ENCODE measurements at regions of chr19 and their contacts with region 1.

Region 1: DNA sequence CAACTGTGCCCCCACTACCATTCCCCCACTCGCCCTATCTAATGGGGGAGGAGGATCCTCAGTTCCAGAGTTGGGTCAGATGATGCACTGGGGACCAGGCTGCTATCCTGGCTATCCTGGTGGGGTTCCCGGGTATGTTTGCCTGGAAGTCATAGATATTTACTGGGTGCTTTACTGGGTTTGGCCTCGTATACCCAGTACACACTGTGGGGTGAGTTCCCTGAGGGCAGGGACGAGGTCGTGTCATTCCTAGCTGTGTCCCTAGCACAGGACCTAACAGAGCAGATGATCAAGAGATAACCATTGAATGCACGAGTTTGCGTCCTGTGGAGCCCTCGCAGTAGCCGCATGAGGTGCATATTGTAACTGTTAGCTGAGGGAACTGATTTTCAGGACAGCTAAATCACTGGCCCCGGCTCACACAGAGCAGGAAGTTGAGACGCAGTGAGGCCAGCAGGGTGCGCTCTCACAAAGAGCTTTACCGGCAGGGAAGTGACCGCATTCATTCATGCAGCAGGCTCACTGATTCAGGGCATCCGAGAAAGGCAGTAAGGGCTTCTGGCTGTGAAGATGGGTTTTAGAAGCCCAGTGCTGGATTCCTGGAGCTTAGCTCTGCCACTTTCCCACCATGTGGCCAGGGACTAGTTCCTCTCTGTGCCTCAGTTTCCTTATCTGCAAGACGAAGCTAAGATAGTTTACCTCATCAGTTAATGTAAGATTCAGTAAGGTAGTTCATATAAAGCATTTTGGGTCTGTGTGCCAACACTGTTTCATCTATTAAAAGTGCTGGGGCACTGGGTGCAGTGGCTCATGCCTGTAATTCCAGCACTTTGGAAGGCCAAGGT is 6.0 kb downstream of the RUVBL2 start:
- DNase-seq: peak; percentile 54
- CTCF ChIP-seq: peak; percentile 81

Region 2: DNA sequence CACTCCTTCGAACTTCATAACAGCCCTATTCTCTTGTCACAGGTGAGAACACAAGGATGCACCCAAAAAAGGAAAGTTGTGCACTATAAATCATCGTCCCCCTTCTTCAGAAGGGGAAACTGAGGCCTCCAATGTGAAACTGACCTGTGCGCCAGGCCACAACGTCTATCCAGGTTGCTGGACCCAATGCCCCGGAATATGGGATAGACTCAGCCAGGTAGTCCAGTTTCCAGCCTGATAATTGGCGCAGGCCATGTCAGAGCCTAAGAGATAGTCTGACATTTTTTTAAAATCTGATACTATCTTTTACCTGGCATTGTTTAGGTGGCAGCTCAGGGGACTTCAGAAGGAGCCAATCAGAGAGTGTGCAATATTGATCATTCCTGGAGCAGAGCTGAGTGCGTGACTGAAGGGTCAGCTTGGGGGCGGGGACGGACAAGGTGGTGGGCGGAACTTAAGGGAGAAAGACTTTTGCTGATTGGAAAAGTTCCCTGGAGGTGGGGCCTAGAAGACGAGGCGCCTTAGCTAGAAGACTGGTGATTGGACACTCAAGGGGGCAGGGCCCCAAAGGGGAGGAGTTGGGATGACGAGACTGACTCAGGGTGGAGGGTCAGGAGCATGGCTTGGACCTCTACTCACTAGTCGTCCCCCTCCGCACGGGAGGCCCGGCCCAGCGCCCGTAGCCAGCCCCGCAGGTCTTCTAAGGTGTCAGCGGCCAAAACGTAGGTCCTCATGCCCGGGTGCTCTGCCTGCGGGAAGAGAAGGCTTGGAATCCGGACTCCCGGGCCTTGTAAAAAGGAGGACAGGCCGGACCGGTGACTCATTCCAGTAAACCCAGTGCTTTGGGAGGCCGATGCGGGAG is 139.8 kb before region 1 on chr19:
- CTCF ChIA-PET with region 1: no interaction called
- POLR2A ChIA-PET with region 1: no interaction called
- DNase-seq: peak; percentile 56
- CTCF ChIP-seq: no peak

Region 3: GRCh38 chr19:48987423-48987722 is 12.3 kb before region 1 on chr19:
- CTCF ChIA-PET with region 1: interaction called, 11 read pairs
- POLR2A ChIA-PET with region 1: no interaction called
- DNase-seq: no peak
- CTCF ChIP-seq: no peak

Region 4: GRCh38 chr19:49017666-49018351 is 18.1 kb after region 1 on chr19:
- CTCF ChIA-PET with region 1: interaction called, 36 read pairs
- POLR2A ChIA-PET with region 1: interaction called, 3 read pairs
- DNase-seq: peak; percentile 79
- CTCF ChIP-seq: peak; percentile 53

Region 5: DNA sequence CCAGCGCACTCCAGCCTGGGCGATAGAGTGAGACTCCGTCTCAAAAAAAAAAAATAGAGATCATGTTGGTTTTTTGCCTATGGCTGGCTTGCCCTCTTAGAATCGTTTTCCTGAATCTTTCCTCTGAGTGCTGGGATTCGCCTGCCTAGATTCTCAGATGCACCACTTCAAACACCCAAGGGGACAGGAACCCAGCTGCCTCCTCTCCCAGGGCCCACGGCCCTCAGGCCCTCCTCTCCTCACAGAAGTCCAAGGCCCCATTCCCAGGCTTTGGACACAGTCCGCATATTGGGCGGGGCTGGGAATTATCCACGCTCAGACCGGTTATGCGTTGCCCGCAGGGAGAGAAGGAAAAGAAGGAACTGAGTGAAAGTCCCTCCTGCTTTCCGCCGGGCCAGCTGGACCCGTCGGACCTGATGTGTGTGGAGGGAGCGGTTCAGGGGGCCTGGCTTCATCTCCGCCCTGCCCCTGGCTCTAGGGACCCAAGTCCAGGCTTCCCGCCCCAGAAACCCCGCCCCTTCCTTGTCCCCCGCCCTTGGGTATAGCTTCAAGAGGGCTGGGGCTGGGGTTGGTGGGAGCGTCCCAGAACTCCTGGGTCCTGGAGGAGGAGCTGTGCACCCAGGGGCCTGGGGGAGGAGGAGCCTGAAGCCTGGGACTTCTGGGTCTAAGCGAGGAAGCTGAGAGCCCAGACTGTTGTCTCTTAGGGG is 125.5 kb after region 1 on chr19:
- CTCF ChIA-PET with region 1: no interaction called
- POLR2A ChIA-PET with region 1: no interaction called
- DNase-seq: no peak
- CTCF ChIP-seq: no peak

Region 6: DNA sequence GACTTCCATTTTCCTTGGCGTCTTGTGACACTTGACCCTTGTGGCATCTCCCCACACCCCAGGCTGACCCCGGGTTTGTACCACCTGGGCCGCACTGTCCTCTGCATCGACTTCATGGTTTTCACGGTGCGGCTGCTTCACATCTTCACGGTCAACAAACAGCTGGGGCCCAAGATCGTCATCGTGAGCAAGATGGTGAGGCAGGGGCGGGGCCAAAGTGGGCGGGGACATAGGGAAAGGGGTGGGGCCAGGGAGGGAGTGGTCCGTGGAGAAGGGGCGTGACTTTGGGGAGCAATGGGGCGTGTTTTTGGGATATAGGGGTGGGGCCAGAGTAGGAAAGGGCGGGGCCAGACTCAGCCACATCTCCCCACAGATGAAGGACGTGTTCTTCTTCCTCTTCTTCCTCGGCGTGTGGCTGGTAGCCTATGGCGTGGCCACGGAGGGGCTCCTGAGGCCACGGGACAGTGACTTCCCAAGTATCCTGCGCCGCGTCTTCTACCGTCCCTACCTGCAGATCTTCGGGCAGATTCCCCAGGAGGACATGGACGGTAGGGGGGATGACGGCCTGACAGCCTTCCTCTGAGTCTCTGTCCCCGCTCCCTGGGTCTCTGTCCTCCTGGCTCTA is 200.6 kb after region 1 on chr19:
- CTCF ChIA-PET with region 1: interaction called, 21 read pairs
- POLR2A ChIA-PET with region 1: no interaction called
- DNase-seq: no peak
- CTCF ChIP-seq: no peak

Measured in GM10248 (cell line).